Calu3 (cell line): ENCODE measurements at regions of chr1 and their contacts with region 1.

Region 1: GRCh38 chr1:147185441-147185840 is 13.2 kb upstream of the PRKAB2 start:
- DNase-seq: no peak
- H3K4me3 Mint-ChIP-seq: no peak overlapping the region
- H3K27ac Mint-ChIP-seq: no peak overlapping the region
- H3K4me1 Mint-ChIP-seq: no peaks in the 10 kb centered on the region
- H3K27me3 Mint-ChIP-seq: no peaks in the 10 kb centered on the region
- CTCF ChIP-seq: no peak

Region 2: DNA sequence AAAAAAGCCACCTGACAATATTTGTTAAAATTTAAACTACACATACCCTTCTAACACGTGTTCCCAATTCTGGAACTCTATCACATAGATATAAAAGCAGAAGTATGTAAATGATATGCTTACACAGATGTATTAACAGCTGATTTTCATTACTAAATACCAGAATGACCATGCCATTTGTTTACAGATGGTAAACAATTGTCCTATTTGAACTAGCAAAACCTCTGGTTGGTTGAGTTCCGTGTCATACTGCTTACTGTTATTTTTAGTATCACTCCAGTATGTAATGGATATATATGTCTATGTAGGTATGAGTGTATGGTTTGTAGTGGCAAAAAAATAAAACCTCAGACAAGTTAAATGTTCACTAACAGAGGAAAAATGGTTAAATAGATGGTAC is 127.8 kb after region 1 on chr1:
- CTCF ChIA-PET with region 1: interaction called, 10 read pairs
- intact Hi-C with region 1: no loop called
- DNase-seq: no peak
- H3K4me3 Mint-ChIP-seq: no peak overlapping the region
- H3K27ac Mint-ChIP-seq: no peak overlapping the region
- H3K4me1 Mint-ChIP-seq: no peaks in the 10 kb centered on the region
- H3K27me3 Mint-ChIP-seq: no peaks in the 10 kb centered on the region
- CTCF ChIP-seq: no peak